Activated CD8-positive, alpha-beta memory T cell treated with anti-CD3 and anti-CD28 coated beads, Interleukin-2, amount 10 ng/mL, durations not matched to agents 7 days and 5 days (primary cell): ENCODE measurements at regions of chr1 and their contacts with region 1.

Region 1: GRCh38 chr1:206479183-206480125 is 9.2 kb downstream of the IKBKE start:
- DNase-seq: peak; percentile 80
- ATAC-seq: peak; percentile 72
- H3K4me3 Mint-ChIP-seq: no peak overlapping the region
- H3K27ac Mint-ChIP-seq: peak overlapping the region; percentile 61
- H3K4me1 Mint-ChIP-seq: peaks cover 17% of the 10 kb centered on the region
- H3K27me3 Mint-ChIP-seq: no peaks in the 10 kb centered on the region

Region 2: GRCh38 chr1:206442101-206442500 is 37.4 kb before region 1 on chr1:
- CTCF ChIA-PET with region 1: no interaction called
- DNase-seq: no peak
- ATAC-seq: no peak
- H3K4me3 Mint-ChIP-seq: no peak overlapping the region
- H3K27ac Mint-ChIP-seq: no peak overlapping the region
- H3K4me1 Mint-ChIP-seq: peaks cover 4% of the 10 kb centered on the region
- H3K27me3 Mint-ChIP-seq: no peaks in the 10 kb centered on the region

Region 3: DNA sequence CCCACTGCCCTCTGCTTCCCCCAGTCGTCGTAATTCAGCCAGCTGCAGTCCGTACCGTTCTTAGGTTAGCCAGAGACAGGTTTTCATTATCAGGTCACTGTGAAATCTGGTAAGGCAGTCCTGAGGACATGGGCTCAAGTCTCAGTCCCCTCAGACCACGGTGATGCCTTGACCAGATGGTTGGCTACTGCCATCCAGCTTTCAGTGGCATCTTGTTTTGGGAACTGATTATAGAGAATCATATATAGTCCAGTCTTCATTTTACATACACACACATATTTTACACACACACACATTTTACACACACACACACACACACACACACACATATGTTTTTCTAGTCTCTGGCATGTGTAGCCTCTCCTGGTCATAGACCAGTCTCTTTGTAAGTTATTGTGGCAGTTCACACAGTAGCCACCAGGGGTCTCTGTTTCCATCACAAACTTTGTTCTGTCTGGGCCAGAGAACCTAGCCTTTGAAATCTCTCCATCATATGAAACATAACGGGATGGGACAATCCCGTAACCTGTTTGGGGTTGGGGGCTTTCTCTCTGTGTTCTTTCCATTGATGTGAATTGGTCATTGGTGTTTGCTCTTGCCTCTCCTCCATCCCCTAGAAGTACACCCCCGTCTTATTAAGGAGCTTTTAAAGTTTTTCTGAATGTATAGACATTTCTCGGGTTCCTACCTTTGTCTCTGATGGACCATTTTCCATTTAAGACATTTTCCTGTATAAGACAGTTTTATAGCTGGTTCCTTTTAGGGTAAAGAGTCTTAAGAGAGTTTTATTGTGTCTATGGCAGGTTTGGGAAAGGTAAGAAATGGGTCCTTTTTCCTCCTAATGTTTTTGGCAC is 17.6 kb before region 1 on chr1:
- CTCF ChIA-PET with region 1: interaction called, 26 read pairs
- DNase-seq: peak; percentile 86
- ATAC-seq: peak; percentile 77
- H3K4me3 Mint-ChIP-seq: no peak overlapping the region
- H3K27ac Mint-ChIP-seq: no peak overlapping the region
- H3K4me1 Mint-ChIP-seq: peaks cover 45% of the 10 kb centered on the region
- H3K27me3 Mint-ChIP-seq: no peaks in the 10 kb centered on the region

Region 4: GRCh38 chr1:206496131-206496793 is 16.8 kb after region 1 on chr1:
- CTCF ChIA-PET with region 1: interaction called, 21 read pairs
- DNase-seq: no peak
- ATAC-seq: no peak
- H3K4me3 Mint-ChIP-seq: no peak overlapping the region
- H3K27ac Mint-ChIP-seq: peak overlapping the region; percentile 42
- H3K4me1 Mint-ChIP-seq: peaks cover 15% of the 10 kb centered on the region
- H3K27me3 Mint-ChIP-seq: no peaks in the 10 kb centered on the region

Region 5: GRCh38 chr1:206507284-206508129 is 28.1 kb after region 1 on chr1 and contains the start of gene RASSF5:
- CTCF ChIA-PET with region 1: interaction called, 10 read pairs
- DNase-seq: peak; percentile 90
- ATAC-seq: peak; percentile 87
- H3K4me3 Mint-ChIP-seq: peak within 1 kb of the TSS; percentile 67
- H3K27ac Mint-ChIP-seq: no peak within 1 kb of the TSS
- H3K4me1 Mint-ChIP-seq: peaks cover 48% of the 10 kb centered on the region
- H3K27me3 Mint-ChIP-seq: peaks cover 26% of the 10 kb centered on the region
- total RNA-seq, gene RASSF5: 184 to 216 TPM